MCF 10A (cell line): ENCODE measurements at regions of chr5 and their contacts with region 1.

Region 1: DNA sequence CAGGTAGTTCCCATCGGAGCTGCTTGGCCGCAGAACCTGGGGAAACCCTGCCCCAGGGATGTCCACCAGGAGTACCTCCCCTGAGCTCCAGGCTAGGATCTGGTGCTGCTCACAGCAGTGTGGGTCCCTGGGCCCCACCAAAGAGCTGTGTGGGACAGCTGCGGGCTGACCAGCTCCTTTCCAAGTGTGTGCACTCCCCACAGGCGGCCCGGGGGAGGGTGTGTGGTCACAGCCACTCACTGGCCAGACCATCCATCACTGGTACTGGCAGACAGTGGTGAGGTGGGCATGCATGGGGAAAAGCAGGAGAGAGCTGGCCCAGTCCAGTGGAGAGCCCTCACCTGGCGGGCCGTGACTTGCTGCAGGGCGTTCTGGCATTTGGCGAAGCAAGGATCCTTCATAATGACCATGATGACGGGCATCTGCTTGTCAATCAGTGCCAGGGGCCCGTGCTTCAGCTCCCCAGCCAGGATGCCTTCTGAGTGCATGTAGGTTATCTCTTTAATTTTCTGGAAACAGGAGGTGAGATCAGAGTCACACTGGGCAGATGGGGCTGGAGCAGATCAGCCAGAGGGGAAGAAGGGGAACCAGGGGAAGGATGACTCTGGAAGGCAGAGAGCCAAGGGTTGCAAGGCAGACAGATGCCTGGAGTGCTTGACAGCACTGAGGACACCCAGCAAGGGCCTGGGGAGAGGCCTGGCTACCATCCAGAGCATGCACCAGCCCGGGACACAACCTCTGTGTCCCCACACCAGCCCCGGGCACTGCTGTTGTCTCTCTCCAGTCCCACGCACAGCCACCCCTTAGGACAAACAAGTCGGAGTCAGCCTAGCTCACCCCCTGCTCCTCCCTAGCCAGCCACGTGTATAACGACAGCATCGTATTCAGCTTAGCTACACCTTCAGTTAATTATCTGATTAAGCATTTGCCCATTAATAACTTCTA is 12.8 kb upstream of the MAPK9 start:
- DNase-seq: no peak
- H3K4me3 Mint-ChIP-seq: no peak overlapping the region
- H3K27ac Mint-ChIP-seq: no peak overlapping the region
- H3K4me1 Mint-ChIP-seq: no peaks in the 10 kb centered on the region
- H3K27me3 Mint-ChIP-seq: peaks cover 12% of the 10 kb centered on the region
- CTCF ChIP-seq: no peak

Region 2: DNA sequence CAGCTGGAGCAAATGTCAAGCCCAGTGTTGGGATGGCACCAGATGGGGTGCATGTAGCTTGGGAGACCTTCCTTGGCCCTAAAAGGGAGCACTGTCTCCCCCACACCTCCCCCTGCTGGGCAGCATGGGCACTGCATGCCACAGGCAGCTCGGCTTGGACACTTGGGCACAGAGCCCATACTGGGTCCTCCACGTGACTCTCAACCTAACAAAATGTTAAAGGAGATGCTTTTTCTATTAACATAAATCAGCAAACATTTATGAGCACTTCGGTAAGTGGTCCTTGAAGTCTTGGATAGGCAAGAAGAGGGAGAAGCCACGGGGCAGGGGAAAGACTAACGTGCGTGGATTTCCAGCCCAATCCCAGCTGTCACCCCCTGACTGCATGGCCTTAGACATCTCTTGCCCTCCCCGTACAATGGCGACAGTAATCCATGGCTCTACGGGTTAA is 11.1 kb after region 1 on chr5:
- CTCF ChIA-PET with region 1: interaction called, 39 read pairs
- POLR2A ChIA-PET with region 1: interaction called, 3 read pairs
- intact Hi-C with region 1: no loop called
- DNase-seq: peak; percentile 82
- H3K4me3 Mint-ChIP-seq: no peak overlapping the region
- H3K27ac Mint-ChIP-seq: no peak overlapping the region
- H3K4me1 Mint-ChIP-seq: no peaks in the 10 kb centered on the region
- H3K27me3 Mint-ChIP-seq: no peaks in the 10 kb centered on the region
- CTCF ChIP-seq: peak; percentile 95

Region 3: GRCh38 chr5:180591311-180591887 is 286.7 kb after region 1 on chr5 and contains the start of gene SCGB3A1:
- CTCF ChIA-PET with region 1: no interaction called
- POLR2A ChIA-PET with region 1: no interaction called
- intact Hi-C with region 1: no loop called
- DNase-seq: no peak
- H3K4me3 Mint-ChIP-seq: no peak within 1 kb of the TSS
- H3K27ac Mint-ChIP-seq: no peak within 1 kb of the TSS
- H3K4me1 Mint-ChIP-seq: no peaks in the 10 kb centered on the region
- H3K27me3 Mint-ChIP-seq: peaks cover 46% of the 10 kb centered on the region
- CTCF ChIP-seq: no peak
- total RNA-seq, gene SCGB3A1: not detected in 2 replicates

Region 4: GRCh38 chr5:180831139-180832048 is 526.7 kb after region 1 on chr5:
- CTCF ChIA-PET with region 1: no interaction called
- POLR2A ChIA-PET with region 1: no interaction called
- intact Hi-C with region 1: no loop called
- DNase-seq: peak; percentile 70
- H3K4me3 Mint-ChIP-seq: peak overlapping the region; percentile 93
- H3K27ac Mint-ChIP-seq: peak overlapping the region; percentile 96
- H3K4me1 Mint-ChIP-seq: peaks cover 15% of the 10 kb centered on the region
- H3K27me3 Mint-ChIP-seq: no peaks in the 10 kb centered on the region
- CTCF ChIP-seq: no peak

Region 5: DNA sequence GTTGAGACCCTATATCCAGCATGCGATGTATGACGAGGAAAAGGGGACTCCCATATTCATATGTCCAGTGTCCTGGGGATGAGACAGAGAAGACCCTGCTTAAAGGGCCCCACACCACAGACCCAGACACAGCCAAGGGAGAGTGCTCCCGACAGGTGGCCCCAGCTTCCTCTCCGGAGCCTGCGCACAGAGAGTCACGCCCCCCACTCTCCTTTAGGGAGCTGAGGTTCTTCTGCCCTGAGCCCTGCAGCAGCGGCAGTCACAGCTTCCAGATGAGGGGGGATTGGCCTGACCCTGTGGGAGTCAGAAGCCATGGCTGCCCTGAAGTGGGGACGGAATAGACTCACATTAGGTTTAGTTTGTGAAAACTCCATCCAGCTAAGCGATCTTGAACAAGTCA is 701.1 kb after region 1 on chr5:
- CTCF ChIA-PET with region 1: no interaction called
- POLR2A ChIA-PET with region 1: no interaction called
- intact Hi-C with region 1: no loop called
- DNase-seq: no peak
- H3K4me3 Mint-ChIP-seq: no peak overlapping the region
- H3K27ac Mint-ChIP-seq: no peak overlapping the region
- H3K4me1 Mint-ChIP-seq: no peaks in the 10 kb centered on the region
- H3K27me3 Mint-ChIP-seq: no peaks in the 10 kb centered on the region
- CTCF ChIP-seq: no peak